Endothelial cell of umbilical vein (primary cell): ENCODE measurements at regions of chr6 and their contacts with region 1.

Region 1: GRCh38 chr6:35583893-35584688 is 71.4 kb upstream of the TULP1 start:
- DNase-seq: peak; percentile 82
- H3K4me3 ChIP-seq: no peak overlapping the region
- H3K27ac ChIP-seq: no peak overlapping the region
- H3K4me1 ChIP-seq: no peaks in the 10 kb centered on the region
- H3K27me3 ChIP-seq: no peaks in the 10 kb centered on the region
- CTCF ChIP-seq: peak; percentile 69 to 78
- POLR2A ChIP-seq: no peak

Region 2: GRCh38 chr6:33683051-33683571 is 1901.0 kb before region 1 on chr6:
- CTCF ChIA-PET with region 1: no interaction called
- POLR2A ChIA-PET with region 1: no interaction called
- dilution Hi-C with region 1: no loop called
- intact Hi-C with region 1: no loop called
- DNase-seq: no peak
- H3K4me3 ChIP-seq: no peak overlapping the region
- H3K27ac ChIP-seq: no peak overlapping the region
- H3K4me1 ChIP-seq: no peaks in the 10 kb centered on the region
- H3K27me3 ChIP-seq: no peaks in the 10 kb centered on the region
- CTCF ChIP-seq: no peak
- POLR2A ChIP-seq: no peak

Region 3: GRCh38 chr6:35601331-35602132 is 17.4 kb after region 1 on chr6:
- CTCF ChIA-PET with region 1: interaction called, 17 read pairs
- POLR2A ChIA-PET with region 1: interaction called, 3 read pairs
- dilution Hi-C with region 1: no loop called
- intact Hi-C with region 1: no loop called
- DNase-seq: peak; percentile 88
- H3K4me3 ChIP-seq: peak overlapping the region in 1 of 3 experiments; percentile 21
- H3K27ac ChIP-seq: peak overlapping the region; percentile 96
- H3K4me1 ChIP-seq: peaks cover 72% of the 10 kb centered on the region
- H3K27me3 ChIP-seq: no peaks in the 10 kb centered on the region
- CTCF ChIP-seq: no peak
- POLR2A ChIP-seq: no peak

Region 4: GRCh38 chr6:35647400-35647799 is 63.3 kb after region 1 on chr6:
- CTCF ChIA-PET with region 1: no interaction called
- POLR2A ChIA-PET with region 1: no interaction called
- dilution Hi-C with region 1: no loop called
- intact Hi-C with region 1: no loop called
- DNase-seq: no peak
- H3K4me3 ChIP-seq: no peak overlapping the region
- H3K27ac ChIP-seq: no peak overlapping the region
- H3K4me1 ChIP-seq: no peaks in the 10 kb centered on the region
- H3K27me3 ChIP-seq: no peaks in the 10 kb centered on the region
- CTCF ChIP-seq: no peak
- POLR2A ChIP-seq: no peak

Region 5: GRCh38 chr6:35669451-35670045 is 85.5 kb after region 1 on chr6:
- CTCF ChIA-PET with region 1: interaction called, 5 read pairs
- POLR2A ChIA-PET with region 1: no interaction called
- dilution Hi-C with region 1: no loop called
- intact Hi-C with region 1: loop called (anchors 1 kb)
- DNase-seq: peak; percentile 94
- H3K4me3 ChIP-seq: peak overlapping the region in 2 of 3 experiments; percentile 2 to 59
- H3K27ac ChIP-seq: peak overlapping the region; percentile 95
- H3K4me1 ChIP-seq: peaks cover 51% of the 10 kb centered on the region
- H3K27me3 ChIP-seq: no peaks in the 10 kb centered on the region
- CTCF ChIP-seq: no peak
- POLR2A ChIP-seq: no peak

Region 6: GRCh38 chr6:35688581-35689322 is 104.7 kb after region 1 on chr6 and contains the start of gene FKBP5:
- CTCF ChIA-PET with region 1: interaction called, 29 read pairs
- POLR2A ChIA-PET with region 1: no interaction called
- dilution Hi-C with region 1: no loop called
- intact Hi-C with region 1: loop called (anchors 1 kb)
- DNase-seq: peak; percentile 89
- H3K4me3 ChIP-seq: peak within 1 kb of the TSS; percentile 55 to 91 (median 56)
- H3K27ac ChIP-seq: peak within 1 kb of the TSS; percentile 79
- H3K4me1 ChIP-seq: peaks cover 10% of the 10 kb centered on the region
- H3K27me3 ChIP-seq: no peaks in the 10 kb centered on the region
- CTCF ChIP-seq: no peak
- POLR2A ChIP-seq: peak; percentile 92
- total RNA-seq, gene FKBP5: 56.8 and 70.6 TPM in 2 replicates

Region 7: DNA sequence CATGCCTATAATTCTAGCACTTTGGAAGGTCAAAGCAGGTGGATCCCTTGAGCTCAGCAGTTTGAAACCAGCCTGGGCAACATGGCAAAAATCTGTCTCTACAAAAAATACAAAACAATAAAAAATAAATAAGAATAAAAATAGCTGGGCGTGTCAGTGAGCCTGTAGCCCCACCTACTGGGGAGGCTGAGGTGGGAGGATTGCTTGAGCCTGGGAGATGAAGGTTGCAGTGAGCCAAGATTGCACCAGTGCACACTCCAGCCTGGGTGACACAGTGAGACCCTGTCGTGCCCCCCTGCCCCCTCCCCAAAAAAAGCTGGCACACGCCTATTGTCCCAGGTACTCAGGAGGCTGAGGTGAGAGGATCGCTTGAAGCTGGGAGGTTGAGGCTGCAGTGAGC is 371.9 kb after region 1 on chr6:
- CTCF ChIA-PET with region 1: no interaction called
- POLR2A ChIA-PET with region 1: no interaction called
- dilution Hi-C with region 1: no loop called
- intact Hi-C with region 1: loop called (anchors 10 kb)
- DNase-seq: no peak
- H3K4me3 ChIP-seq: no peak overlapping the region
- H3K27ac ChIP-seq: no peak overlapping the region
- H3K4me1 ChIP-seq: peaks cover 16% of the 10 kb centered on the region
- H3K27me3 ChIP-seq: peaks cover 2 to 6% of the 10 kb centered on the region in 2 experiments
- CTCF ChIP-seq: peak; percentile 17 to 27
- POLR2A ChIP-seq: no peak